ENCODE measurements at regions of chr2 and their contacts with region 1.

Region 1: DNA sequence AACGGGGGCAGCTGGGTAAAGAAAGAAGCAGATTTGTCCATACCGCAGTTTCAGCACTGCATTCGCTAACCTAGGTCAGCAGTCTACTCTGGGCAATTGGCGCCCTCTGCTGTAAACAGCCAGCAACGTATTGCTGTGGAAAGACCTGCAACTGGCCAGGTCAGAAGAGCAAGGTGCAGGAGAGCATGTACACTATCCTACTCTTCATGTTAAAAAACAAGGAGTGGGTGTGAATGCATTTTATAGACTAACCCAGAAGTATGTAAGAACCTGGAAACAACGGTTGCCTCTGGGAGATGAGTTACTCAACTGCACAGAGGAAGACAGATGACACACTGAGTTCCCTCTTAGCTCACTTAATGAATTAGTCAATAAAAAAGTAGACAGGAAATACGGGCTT is 6.2 kb downstream of the MRPS5 start:
- DNase-seq: peak; percentile 68 to 83
- ATAC-seq: peak; percentile 99 to 100
- H3K4me3 ChIP-seq: no peak overlapping the region
- H3K27ac ChIP-seq: no peak overlapping the region
- H3K4me1 ChIP-seq: peaks cover 4% of the 10 kb centered on the region; the same call in 2 of the 3 replicates
- CTCF ChIP-seq: peak; percentile 80
- EP300 ChIP-seq: no peak
- POLR2A ChIP-seq: no peak
- RAD21 ChIP-seq: peak; percentile 76 to 79

Region 2: DNA sequence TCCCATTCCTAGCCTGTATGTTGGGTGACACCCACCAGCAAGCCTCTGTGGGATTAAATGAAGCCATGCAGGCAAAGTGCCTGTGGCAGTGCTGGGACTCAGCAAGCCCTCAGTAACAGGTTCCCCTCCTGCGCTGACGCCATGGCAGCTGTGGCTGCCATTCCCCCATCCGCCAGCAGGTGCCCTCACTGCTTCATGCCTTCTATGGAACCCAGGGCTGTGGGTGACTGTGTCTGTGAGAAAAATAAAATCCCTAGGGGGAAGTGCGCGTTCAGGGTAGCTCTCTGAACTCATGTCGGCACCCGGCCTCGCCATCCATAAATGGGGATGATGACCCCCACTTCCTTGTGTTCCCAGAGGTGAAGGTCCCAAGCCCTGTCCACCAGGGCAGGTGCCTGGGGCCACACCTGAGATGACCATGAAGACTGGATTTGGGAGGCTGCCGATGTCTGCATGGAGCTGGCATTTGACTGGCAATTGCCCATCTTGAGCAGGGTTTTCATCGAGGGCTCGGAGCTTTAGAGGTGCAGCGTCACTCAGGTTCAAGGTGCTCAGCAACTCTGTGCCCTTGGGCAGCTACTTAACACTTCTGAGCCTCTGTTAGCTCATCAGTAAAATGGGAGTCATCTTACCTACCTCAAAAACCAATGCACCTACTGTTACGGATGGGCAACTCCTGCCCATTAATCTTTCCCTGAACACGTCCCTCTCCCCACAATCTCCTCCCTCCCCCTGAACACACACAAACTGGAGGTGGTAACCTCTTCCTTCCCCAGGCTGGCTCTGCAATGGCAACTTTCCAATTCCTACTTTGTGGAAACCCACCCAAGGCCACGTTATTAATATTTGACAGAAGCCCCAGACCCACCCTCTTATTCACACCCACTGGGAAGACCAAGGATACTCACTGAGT is 92.9 kb before region 1 on chr2:
- CTCF ChIA-PET with region 1: interaction called, 17 read pairs
- POLR2A ChIA-PET with region 1: no interaction called
- DNase-seq: peak; percentile 59 to 67
- ATAC-seq: peak; percentile 72 to 89
- H3K4me3 ChIP-seq: no peak overlapping the region
- H3K27ac ChIP-seq: no peak overlapping the region
- H3K4me1 ChIP-seq: 0 out of 3 replicates have a peak, but pooled peaks cover 3% of the 10 kb centered on the region
- CTCF ChIP-seq: peak; percentile 70
- EP300 ChIP-seq: no peak
- POLR2A ChIP-seq: no peak
- RAD21 ChIP-seq: peak; percentile 67 to 84; a peak in 4 of 5 replicates

Region 3: DNA sequence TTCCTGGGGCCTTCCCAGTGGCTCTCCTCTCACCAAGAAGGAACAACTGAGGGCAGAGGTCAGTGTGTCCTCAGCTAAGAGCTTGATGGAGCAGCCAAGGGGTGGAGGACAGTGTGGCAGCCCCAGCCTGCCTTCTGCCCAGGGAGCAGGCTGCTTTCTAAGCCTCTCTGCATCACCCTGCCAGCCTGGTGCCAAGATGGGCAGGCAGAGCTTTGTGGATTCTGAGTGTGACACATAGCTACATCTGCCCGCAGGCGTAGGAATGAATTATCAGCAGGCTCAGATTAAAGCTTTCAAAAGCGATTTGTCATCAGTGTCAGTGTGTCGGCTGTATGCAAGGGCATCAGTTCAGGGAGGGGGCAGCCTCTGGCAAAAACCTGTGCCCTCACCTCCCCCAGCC is 81.2 kb before region 1 on chr2:
- CTCF ChIA-PET with region 1: interaction called, 10 read pairs
- POLR2A ChIA-PET with region 1: no interaction called
- DNase-seq: no peak
- ATAC-seq: peak; percentile 38 to 47; a peak in 4 of 6 replicates
- H3K4me3 ChIP-seq: no peak overlapping the region
- H3K27ac ChIP-seq: no peak overlapping the region
- H3K4me1 ChIP-seq: no peaks in the 10 kb centered on the region
- CTCF ChIP-seq: no peak
- EP300 ChIP-seq: no peak
- POLR2A ChIP-seq: no peak
- RAD21 ChIP-seq: no peak

Region 4: GRCh38 chr2:95082477-95082876 is 32.9 kb before region 1 on chr2:
- CTCF ChIA-PET with region 1: interaction called, 65 read pairs
- POLR2A ChIA-PET with region 1: no interaction called
- DNase-seq: no peak
- ATAC-seq: no peak
- H3K4me3 ChIP-seq: no peak overlapping the region
- H3K27ac ChIP-seq: no peak overlapping the region
- H3K4me1 ChIP-seq: peaks cover under 1% of the 10 kb centered on the region; the same call in 1 of the 3 replicates
- CTCF ChIP-seq: no peak
- EP300 ChIP-seq: no peak
- POLR2A ChIP-seq: no peak
- RAD21 ChIP-seq: no peak

Region 5: GRCh38 chr2:95143838-95144237 is 28.4 kb after region 1 on chr2:
- CTCF ChIA-PET with region 1: no interaction called
- POLR2A ChIA-PET with region 1: no interaction called
- DNase-seq: no peak
- ATAC-seq: no peak
- H3K4me3 ChIP-seq: no peak overlapping the region
- H3K27ac ChIP-seq: no peak overlapping the region
- H3K4me1 ChIP-seq: no peaks in the 10 kb centered on the region
- CTCF ChIP-seq: no peak
- EP300 ChIP-seq: no peak
- POLR2A ChIP-seq: no peak
- RAD21 ChIP-seq: no peak

Measured in A549 (cell line).